ENCODE measurements at regions of chr2 and their contacts with region 1.

Region 1: DNA sequence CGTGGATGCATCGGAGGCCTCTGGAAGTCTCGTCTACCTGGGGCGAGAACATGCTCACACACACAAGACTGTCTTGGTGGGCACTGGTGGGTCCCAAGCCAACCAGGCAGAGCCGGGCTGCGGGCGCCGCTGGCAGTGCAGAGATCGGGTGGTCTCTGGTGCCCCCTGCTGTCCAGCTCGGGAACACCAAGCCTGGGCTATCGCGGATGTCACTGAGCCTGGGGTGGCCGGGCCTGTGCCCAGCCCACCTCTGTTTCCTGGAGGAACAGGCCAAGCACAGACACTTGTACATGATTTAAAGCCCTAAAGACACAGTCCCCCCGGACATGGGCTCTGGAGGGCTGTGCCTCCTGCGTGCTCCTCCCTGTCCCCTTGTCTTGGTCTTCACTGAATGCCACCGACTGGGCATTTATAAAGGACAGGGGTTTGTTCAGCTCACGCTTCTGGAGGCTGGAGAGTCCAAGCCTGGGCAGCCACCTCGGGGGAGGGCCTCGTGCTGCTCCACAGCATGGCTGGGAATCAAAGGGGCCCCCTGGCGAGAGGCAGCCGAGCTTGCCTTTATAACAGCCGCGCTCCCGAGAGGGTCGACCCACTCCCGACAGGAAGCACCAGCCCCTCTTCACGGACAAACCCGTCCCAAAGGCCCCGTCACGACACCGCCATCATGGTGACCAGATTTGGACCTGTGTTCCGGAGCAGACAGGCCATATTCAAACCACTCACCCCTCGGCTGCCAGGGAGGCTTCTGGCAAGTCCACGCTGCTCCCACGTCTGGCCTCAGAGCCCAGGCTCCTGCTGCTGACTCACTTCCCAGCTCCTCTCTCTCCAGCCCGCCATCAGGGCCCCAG is 3.6 kb upstream of the OTOS start:
- DNase-seq: peak in 1 of 2 donors; percentile 74
- ATAC-seq: peak; percentile 94

Region 2: GRCh38 chr2:239882331-239882732 is 261.7 kb before region 1 on chr2:
- intact Hi-C with region 1: no loop called
- DNase-seq: peak; percentile 41 to 72
- ATAC-seq: peak; percentile 87

Region 3: DNA sequence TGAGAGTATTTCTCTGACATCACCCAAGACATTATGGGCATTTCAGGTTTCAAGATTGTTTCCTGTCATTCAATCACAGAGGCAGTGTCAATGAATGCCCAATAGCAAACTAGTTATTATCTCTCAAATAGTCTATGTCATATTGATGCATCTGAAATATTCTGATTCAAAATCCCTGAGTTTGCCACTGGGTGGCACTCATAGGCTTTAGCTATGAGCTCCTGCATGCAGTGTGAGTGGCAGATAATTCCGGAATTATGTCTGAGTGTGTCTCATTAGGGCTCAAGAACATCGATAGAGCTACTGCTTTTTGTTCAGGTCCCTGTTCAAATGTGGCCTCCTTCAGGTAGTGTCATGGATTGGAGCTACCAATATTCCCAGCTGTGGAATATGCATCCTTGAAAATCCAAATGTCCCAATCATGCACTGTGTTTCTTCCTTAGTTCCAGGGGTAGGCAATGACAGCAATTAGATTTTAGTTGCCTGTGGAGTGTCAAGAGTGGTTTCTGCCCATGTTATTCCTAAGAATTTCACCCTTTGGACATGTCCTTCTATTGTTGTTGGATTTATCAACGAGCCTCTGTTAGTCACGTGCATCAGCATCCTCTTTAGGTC is 82.9 kb before region 1 on chr2:
- intact Hi-C with region 1: loop called (anchors 2 to 5 kb)
- DNase-seq: peak in 1 of 2 donors; percentile 31
- ATAC-seq: peak; percentile 70